Transverse colon (tissue), 4 donors: ENCODE measurements at regions of chr1 and their contacts with region 1.

Region 1: DNA sequence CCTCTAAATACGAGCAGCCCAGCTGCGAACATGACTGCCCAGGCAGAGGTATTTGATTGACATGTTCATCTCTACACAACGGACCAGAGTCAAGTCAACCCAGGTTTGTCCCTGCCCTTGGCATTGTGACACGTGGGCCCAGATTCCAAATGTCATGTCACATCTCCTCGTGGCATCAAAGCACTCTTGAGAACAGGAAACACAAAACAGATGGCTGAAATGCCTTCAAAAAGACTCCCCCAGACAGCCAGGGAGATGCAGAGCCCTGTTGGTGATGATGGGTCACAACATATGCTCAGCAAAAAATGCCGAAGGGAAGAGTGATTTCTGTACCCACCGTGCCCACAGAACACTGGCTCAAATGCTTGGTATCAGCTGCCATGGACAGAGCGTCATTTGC is 337.8 kb upstream of the DAB1 start:
- DNase-seq: no peak
- H3K4me3 ChIP-seq: no peak overlapping the region
- H3K27ac ChIP-seq: no peak overlapping the region
- H3K4me1 ChIP-seq: no peaks in the 10 kb centered on the region
- H3K27me3 ChIP-seq: no peaks in the 10 kb centered on the region
- CTCF ChIP-seq: no peak
- EP300 ChIP-seq: no peak
- POLR2A ChIP-seq: no peak

Region 2: GRCh38 chr1:56322211-56322610 is 1439.4 kb before region 1 on chr1:
- in situ Hi-C with region 1: no loop called
- intact Hi-C with region 1: loop called (anchors 5 kb)
- DNase-seq: no peak
- H3K4me3 ChIP-seq: no peak overlapping the region
- H3K27ac ChIP-seq: no peak overlapping the region
- H3K4me1 ChIP-seq: no peaks in the 10 kb centered on the region
- H3K27me3 ChIP-seq: no peaks in the 10 kb centered on the region
- CTCF ChIP-seq: no peak
- EP300 ChIP-seq: no peak
- POLR2A ChIP-seq: no peak